Activated T-helper 1 cell treated with anti-CD3 and anti-CD28 coated beads, Interleukin-12 subunit alpha, Interleukin-12 subunit beta, Interleukin-2, Interleukin-4 antibody, amounts not matched to agents 30 ng/mL and 10 ng/mL and 1 ng/mL, durations not matched to agents 14 hours and 24 hours and 36 hours (primary cell): ENCODE measurements at regions of chr14 and their contacts with region 1.

Region 1: DNA sequence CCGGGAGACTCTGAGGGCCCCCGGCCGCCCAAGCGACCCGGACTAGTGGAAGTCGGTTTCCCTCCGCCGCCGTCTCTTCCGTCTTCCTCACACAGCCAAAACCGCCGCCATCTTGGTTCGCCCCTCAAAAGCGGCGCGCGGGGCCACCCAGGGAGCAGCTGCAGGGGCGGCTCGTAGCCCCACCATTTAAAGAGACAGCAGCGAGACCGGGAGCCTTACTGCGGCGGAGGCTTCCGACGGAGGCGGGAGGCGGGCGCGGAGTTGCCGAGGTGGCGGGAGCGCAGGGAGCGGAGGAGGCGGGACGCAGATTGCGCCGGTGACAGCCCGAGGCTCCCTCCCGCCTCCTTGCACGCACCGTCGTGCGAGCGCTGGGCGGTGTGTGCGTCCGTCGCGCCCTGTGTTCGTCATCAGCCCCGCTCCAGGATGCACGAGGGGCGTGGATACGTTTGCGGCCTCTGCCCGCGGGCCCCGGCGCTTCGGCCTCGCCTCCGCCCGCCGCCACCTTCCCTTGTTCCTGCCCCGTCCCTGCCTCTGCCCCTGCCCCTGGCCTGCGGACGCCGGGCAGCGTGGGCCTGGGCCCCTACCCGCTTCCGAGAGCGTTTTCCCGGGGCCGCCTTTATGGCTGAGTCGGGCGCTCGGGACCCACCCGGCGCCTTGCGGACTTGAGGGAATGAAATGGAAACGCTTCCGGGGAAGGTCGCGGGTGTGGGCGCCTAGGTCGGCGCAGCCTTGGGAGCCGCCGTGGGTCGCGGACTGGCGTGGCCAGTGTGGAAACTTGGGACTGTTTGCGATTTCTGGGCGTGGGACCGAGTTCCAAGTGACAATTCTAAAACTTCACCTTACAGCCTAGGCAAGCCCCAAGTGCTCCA is at the start of gene PPP4R3A:
- DNase-seq: peak; percentile 91
- H3K4me3 Mint-ChIP-seq: peak within 1 kb of the TSS; percentile 98
- H3K27ac Mint-ChIP-seq: peak within 1 kb of the TSS; percentile 100
- H3K4me1 Mint-ChIP-seq: peaks cover 29% of the 10 kb centered on the region
- H3K27me3 Mint-ChIP-seq: peaks cover 5% of the 10 kb centered on the region
- total RNA-seq, gene PPP4R3A: 130 and 144 TPM in 2 replicates

Region 2: DNA sequence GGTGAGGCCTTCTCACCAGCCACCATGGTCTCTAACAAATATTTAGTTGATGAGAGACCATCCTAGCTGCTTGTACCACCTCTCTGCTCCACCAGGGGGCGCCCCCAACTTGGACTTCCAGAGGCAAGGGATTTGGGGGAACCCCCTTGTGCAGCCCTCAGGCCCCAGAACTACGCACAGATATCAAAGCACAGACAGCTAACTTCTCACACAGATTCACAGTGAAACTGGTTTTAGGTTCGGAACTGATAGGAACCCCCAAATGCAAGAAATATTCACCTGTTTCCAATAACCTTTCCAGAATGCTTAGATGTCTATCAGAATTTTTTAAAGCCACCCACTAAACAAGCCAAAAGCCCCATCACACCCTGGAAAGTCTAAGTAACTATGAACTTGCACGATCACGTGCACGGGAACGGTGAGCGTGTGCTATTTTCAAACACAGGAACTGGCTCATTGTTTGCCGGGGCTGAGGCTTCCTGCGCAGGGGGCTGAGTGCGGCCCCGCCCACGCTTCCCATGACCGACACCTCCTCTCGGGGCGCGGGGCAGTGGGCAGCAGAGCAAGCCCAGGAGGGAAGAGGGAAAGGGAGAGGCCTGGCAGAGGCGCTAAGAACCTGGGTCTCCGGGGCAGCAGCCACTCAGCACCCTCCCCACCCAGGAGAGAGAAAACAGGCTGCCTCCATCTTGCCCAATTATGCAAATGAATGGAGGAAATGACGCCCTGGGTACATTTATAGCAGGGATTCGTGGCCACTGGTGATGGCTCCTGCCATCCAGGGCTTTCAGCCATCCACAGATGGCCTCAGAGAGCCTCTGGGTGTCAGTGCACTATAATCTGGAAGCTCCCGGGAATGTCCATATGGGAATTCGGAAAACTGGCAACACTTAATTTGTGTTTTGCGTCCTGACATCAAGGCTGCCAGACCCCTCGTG is 186.5 kb before region 1 on chr14:
- intact Hi-C with region 1: loop called (anchors 1 kb)
- DNase-seq: peak; percentile 84
- H3K4me3 Mint-ChIP-seq: peak overlapping the region; percentile 80
- H3K27ac Mint-ChIP-seq: peak overlapping the region; percentile 99
- H3K4me1 Mint-ChIP-seq: peaks cover 59% of the 10 kb centered on the region
- H3K27me3 Mint-ChIP-seq: no peaks in the 10 kb centered on the region

Region 3: DNA sequence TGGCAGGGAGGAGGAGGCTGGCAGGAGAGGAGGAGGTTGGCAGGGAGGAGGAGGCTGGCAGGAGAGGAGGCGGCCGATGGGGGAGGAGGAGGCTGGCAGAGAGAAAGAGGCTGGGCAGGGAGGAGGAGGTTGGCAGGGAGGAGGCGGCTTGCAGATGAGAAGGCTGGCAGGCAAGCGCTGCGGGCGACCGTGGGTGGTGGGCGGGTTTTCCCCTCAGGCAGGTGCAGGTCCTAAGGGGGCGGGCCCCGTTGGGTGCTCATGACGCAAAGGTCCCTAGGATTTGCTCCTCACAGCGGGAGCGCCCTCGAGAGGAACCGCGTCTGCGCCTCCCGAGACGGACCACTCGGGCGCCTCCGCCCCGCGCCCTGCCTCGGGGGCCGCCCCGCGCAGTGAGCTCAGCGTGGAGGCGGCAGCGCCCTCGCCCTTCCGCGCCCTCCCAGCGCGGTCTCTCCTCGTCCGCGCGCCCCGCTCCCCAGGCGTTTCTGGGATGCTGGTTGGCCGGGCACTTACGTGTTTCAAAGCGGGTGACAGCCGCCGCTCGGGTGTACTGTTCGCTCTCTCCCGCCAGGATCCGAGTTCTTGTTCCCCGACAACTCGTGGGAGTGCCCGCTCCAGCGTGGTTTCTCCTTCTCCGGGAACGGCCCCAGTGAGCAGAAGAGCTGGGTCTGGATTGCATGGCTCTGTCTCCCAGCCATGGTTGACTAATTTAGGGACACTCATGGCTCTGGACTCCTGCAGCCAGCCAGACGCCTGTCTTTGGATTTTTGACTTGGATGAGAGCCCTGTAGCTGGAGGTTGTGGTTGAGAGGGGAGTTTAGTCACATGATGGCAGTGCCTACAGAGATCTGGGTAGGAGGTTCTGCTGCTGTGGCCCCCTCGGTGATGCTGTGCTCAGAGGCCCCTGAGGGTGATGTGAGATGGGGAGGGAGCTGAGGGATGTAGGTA is 63.8 kb after region 1 on chr14:
- intact Hi-C with region 1: loop called (anchors 5 kb)
- DNase-seq: peak; percentile 33
- H3K4me3 Mint-ChIP-seq: peak overlapping the region; percentile 78
- H3K27ac Mint-ChIP-seq: peak overlapping the region; percentile 27
- H3K4me1 Mint-ChIP-seq: peaks cover 17% of the 10 kb centered on the region
- H3K27me3 Mint-ChIP-seq: peaks cover 28% of the 10 kb centered on the region

Region 4: DNA sequence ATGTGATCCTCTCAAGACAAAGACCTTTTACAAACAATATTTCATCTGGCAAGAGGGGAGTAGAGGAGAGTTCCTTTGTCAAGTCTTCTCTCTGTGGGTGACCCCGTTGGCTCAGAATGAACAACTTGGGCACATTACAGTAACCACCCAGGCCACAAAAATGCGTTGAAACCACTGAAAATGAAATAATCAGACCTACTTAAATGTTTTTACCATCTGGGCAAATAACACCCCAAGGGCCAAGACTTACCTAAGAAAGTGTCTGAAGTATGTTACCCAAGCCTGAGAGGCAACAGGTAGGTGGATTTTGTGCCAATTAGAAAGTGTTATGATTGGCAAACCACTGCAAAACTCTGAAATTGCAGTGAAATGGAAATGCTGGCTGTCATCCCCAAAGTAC is 355.7 kb after region 1 on chr14:
- intact Hi-C with region 1: loop called (anchors 2 kb)
- DNase-seq: no peak
- H3K4me3 Mint-ChIP-seq: peak overlapping the region; percentile 95
- H3K27ac Mint-ChIP-seq: peak overlapping the region; percentile 97
- H3K4me1 Mint-ChIP-seq: peaks cover 89% of the 10 kb centered on the region
- H3K27me3 Mint-ChIP-seq: no peaks in the 10 kb centered on the region

Region 5: GRCh38 chr14:92106143-92106926 is 595.9 kb after region 1 on chr14 and contains the start of gene ATXN3:
- intact Hi-C with region 1: loop called (anchors 1 kb)
- DNase-seq: peak; percentile 93
- H3K4me3 Mint-ChIP-seq: peak within 1 kb of the TSS; percentile 99
- H3K27ac Mint-ChIP-seq: peak within 1 kb of the TSS; percentile 97
- H3K4me1 Mint-ChIP-seq: peaks cover 42% of the 10 kb centered on the region
- H3K27me3 Mint-ChIP-seq: no peaks in the 10 kb centered on the region
- total RNA-seq, gene ATXN3: 27.3 and 27.5 TPM in 2 replicates